ENCODE measurements at regions of chr16 and their contacts with region 1.

Region 1: DNA sequence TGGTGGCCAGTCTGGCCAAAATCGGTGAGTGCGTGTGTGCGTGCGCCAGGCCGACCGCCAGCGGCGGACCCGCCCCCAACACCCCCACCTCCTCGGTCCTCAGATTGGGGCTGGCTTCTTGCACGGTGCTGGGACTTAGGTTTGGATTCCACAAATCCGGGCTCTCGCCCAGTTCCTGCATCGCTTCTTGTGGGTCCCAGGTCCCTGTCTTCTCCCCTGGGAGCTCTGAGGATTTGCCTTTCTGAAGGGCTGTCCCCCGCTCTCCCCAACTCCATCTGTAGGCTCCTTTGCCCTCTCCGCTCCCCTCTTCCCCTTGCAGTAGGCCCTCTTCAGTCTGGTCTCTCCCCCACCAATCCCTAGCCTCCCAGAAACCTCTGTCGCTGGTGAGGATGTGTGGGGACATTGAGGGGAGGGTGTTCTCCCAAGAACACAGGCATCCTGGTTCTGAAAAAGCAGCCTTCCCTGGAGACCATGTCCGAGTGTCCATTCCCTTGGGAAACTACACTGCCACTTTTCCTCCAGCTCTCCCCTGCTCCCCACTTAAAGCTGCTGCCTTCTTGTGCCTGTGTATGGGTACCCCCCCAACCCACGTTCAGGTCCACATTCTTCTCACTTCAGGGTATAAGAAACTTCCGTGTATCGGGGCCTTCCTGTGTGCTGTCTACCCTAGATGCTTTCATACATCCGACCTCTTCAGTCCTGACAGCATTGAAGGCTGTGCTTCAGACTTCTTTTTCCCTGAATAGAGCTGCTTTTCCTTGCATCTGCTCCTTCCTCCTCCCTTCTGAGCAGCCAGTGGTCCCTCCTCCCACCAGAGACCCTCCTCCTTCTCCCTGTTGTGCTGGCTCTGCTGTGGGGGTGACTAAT is 632 bp downstream of the SLC9A5 start:
- DNase-seq: peak in 2 of 5 donors; percentile 7 to 58
- H3K4me3 ChIP-seq: peak overlapping the region; percentile 34
- H3K27ac ChIP-seq: no peak overlapping the region
- H3K4me1 ChIP-seq: peaks cover 12% of the 10 kb centered on the region
- H3K27me3 ChIP-seq: no peaks in the 10 kb centered on the region
- CTCF ChIP-seq: no peak
- EP300 ChIP-seq: no peak
- POLR2A ChIP-seq: no peak

Region 2: DNA sequence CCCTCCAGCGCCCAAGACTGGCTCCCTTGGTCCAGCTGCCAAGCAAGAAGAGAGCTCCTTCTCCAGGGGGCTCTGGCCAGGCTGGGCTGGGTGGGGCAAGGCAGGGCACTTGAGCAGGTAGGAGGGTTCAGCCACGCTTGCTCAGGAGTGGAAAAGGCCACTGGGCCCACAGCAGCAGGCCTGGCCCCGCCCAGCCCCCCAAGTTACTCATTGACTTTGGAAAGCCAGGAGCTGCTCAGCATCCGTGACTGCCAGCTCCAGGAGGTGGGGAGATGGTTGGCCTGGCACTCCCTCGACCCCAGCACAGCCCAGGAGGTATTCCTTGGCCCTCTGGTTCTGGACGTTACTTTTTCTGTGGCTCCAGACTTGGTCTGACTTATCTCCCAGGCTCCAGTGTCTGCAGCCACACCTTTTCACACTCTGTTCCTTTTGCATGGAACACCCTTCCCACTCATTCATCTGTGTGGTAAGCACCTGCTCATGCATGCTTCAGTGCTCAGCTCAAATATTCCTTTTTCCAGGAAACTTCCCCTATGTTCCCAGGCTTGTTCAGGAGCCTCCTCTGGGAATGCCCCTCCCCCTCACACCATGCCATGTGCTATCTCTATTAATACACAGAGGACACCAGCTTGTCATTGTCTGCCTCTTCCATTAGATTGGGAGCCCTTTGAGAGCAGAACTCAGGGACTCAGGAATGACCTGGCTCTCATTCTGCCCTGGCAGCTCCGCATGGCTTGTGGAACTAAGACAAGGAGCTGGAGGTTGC is 330.4 kb before region 1 on chr16 and contains the start of gene CDH16:
- intact Hi-C with region 1: no loop called
- DNase-seq: no peak
- H3K4me3 ChIP-seq: no peak within 1 kb of the TSS
- H3K27ac ChIP-seq: no peak within 1 kb of the TSS
- H3K4me1 ChIP-seq: peaks cover 3% of the 10 kb centered on the region
- H3K27me3 ChIP-seq: no peaks in the 10 kb centered on the region
- CTCF ChIP-seq: no peak
- EP300 ChIP-seq: no peak
- POLR2A ChIP-seq: no peak
- total RNA-seq, gene CDH16: 0.12 to 19.2 (median 0.57) TPM in 5 of 7 donors, not detected in the others

Region 3: DNA sequence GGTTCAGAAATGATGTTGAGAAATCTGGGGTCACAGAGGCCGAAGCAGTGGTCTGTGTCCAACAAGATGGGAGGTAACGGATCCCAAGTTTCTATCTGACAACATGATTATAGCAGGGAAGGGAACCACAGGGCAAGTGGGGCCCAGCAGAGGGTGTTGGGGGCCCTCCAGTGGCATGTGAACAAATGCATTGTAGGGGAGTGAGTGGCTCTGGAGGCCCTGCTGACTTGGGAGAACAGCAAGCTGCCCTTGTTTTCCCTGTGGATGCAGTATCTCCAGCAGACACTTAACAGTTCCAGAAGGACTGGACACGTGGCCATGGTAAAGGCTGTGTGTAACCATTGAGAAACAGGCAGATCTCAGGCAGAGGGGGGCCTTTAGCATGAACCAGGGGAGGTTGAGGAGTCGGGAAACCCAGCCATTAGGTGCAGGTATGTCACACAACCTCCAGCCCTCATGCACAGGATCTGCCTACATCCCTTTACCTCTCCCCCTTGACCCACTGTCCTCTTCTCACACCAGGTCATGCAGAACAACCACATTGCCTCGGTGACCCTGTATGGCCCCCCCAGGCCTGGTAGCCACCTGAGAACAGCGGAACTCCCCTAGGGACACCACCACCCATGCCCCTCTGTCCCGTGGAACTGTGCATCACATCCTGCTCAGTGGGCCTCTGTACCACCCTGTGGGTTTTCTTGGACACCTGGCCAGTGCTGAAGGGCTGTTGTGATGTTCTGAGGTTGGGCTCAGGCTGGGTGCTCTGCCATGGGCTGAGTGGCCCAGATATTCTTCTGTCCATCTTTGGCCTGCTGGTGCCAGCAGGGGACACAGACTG is 102.7 kb before region 1 on chr16:
- intact Hi-C with region 1: no loop called
- DNase-seq: no peak
- H3K4me3 ChIP-seq: no peak overlapping the region
- H3K27ac ChIP-seq: no peak overlapping the region
- H3K4me1 ChIP-seq: no peaks in the 10 kb centered on the region
- H3K27me3 ChIP-seq: no peaks in the 10 kb centered on the region
- CTCF ChIP-seq: no peak
- EP300 ChIP-seq: no peak
- POLR2A ChIP-seq: no peak

Region 4: DNA sequence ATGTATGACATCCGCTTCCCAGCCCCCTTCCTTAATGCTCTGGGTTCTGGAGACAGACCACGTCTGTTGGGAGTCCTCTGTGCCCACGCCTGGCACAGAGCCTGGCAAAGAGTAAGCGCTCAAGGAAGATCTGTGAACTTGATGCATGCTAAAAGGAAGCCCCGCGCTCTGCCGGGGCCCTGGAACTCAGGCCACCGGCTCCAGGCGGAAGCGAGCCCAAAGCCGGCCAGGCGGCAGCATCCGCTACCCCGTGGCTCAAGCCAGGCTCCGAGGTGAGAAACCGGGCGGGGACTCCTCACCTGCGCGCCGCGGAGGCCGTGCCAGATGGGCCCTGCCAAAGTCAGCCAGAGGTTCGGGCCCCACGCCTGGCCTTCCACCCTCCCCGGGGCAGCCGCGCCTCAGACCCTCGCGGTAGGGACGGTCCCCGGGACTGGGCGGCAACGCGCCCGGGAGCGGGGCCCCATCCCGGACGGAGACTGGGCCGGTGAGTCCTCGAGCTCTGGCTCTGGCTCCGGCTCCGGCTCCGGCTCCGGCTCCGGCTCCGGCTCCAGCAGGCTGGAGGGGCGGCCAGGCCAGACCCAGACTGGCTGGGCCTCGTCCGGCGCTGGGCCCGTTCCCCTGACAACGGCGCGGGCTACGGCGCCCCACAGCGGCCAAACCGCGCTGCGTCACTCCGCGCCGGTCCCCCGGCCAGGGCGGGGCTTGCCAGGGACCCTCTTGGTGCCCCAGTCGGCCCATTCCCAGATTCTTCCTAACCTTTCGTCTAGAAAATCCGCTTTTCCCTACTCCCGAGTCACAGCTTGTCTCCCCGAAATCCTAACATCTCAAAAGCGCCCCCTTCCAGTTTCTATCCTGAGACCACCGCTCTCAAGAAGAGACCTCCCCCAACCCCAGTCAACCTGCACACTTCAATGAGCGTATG is 166.7 kb after region 1 on chr16 and contains the start of gene ZDHHC1:
- intact Hi-C with region 1: loop called in 1 of 4 experiments (anchors 10 kb)
- DNase-seq: peak; percentile 74 to 89 (median 81)
- H3K4me3 ChIP-seq: peak within 1 kb of the TSS; percentile 64
- H3K27ac ChIP-seq: peak within 1 kb of the TSS; percentile 19 to 87
- H3K4me1 ChIP-seq: peaks cover 9% of the 10 kb centered on the region
- H3K27me3 ChIP-seq: no peaks in the 10 kb centered on the region
- CTCF ChIP-seq: peak; percentile 26 to 75 (median 62)
- EP300 ChIP-seq: no peak
- POLR2A ChIP-seq: peak; percentile 42
- total RNA-seq, gene ZDHHC1: 17.3 to 45.5 (median 24.8) TPM

Region 5: GRCh38 chr16:68843482-68844210 is 1594.2 kb after region 1 on chr16 and contains the start of gene TANGO6:
- intact Hi-C with region 1: no loop called
- DNase-seq: peak; percentile 81 to 92 (median 87)
- H3K4me3 ChIP-seq: peak within 1 kb of the TSS; percentile 77
- H3K27ac ChIP-seq: peak within 1 kb of the TSS; percentile 80 to 86
- H3K4me1 ChIP-seq: no peaks in the 10 kb centered on the region
- H3K27me3 ChIP-seq: no peaks in the 10 kb centered on the region
- CTCF ChIP-seq: no peak
- EP300 ChIP-seq: no peak
- POLR2A ChIP-seq: peak; percentile 15
- total RNA-seq, gene TANGO6: 9.4 to 27.8 (median 18.3) TPM

Measured in ovary (tissue), 10 donors.